GM12878 (cell line): ENCODE measurements at regions of chr3 and their contacts with region 1.

Region 1: DNA sequence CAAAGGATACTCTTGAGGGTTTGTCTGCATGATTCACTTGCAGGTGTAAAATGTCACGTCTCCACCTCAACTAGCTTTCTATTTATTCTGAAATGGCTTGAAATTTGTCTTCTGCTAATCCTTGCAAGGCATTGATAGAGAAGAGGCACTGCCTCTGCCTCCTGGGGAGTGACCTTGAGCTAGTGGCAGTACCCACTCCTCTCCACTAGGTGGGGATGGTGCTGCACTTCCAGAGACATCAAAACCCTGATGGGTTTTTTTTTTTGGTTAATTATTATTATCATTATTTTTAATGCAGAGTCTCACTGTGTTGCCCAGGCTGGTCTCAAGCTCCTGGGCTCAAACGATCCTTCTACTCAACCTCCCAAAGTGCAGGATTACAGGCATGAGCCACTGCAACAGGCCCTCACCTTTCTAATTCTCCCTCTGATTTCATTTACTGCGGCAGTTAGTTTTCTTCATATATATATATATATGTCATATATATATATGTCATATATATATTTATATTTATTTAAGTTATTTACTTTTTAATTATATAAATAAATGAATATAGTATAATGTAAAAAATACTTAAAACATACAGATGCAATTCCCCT is 117.6 kb upstream of the EIF1B start:
- DNase-seq: no peak
- ATAC-seq: peak; percentile 75
- H3K4me3 ChIP-seq: no peak overlapping the region
- H3K27ac ChIP-seq: no peak overlapping the region
- H3K4me1 ChIP-seq: peaks cover 18% of the 10 kb centered on the region
- H3K27me3 ChIP-seq: no peaks in the 10 kb centered on the region
- CTCF ChIP-seq: peak; percentile 86 to 95 (median 89)
- EP300 ChIP-seq: no peak
- POLR2A ChIP-seq: no peak
- RAD21 ChIP-seq: peak; percentile 89

Region 2: GRCh38 chr3:40309418-40309924 is 117.5 kb after region 1 on chr3 and contains the start of gene EIF1B:
- CTCF ChIA-PET with region 1: interaction called, 317 read pairs
- POLR2A ChIA-PET with region 1: interaction called, 5 read pairs
- RAD21 ChIA-PET with region 1: interaction called, 65 read pairs
- SMC1A ChIA-PET with region 1: interaction called, 52 read pairs
- in situ Hi-C with region 1: no loop called
- intact Hi-C with region 1: no loop called
- DNase-seq: peak; percentile 87
- ATAC-seq: peak; percentile 94
- H3K4me3 ChIP-seq: peak within 1 kb of the TSS; percentile 90
- H3K27ac ChIP-seq: peak within 1 kb of the TSS; percentile 90
- H3K4me1 ChIP-seq: no peaks in the 10 kb centered on the region
- H3K27me3 ChIP-seq: no peaks in the 10 kb centered on the region
- CTCF ChIP-seq: peak; percentile 80 to 88 (median 85)
- EP300 ChIP-seq: no peak; a peak in 1 of 4 replicates
- POLR2A ChIP-seq: peak; percentile 84
- RAD21 ChIP-seq: peak; percentile 18; the same call in 1 of the 2 replicates
- polyA plus RNA-seq, gene EIF1B: 69.3 to 75.6 TPM

Region 3: DNA sequence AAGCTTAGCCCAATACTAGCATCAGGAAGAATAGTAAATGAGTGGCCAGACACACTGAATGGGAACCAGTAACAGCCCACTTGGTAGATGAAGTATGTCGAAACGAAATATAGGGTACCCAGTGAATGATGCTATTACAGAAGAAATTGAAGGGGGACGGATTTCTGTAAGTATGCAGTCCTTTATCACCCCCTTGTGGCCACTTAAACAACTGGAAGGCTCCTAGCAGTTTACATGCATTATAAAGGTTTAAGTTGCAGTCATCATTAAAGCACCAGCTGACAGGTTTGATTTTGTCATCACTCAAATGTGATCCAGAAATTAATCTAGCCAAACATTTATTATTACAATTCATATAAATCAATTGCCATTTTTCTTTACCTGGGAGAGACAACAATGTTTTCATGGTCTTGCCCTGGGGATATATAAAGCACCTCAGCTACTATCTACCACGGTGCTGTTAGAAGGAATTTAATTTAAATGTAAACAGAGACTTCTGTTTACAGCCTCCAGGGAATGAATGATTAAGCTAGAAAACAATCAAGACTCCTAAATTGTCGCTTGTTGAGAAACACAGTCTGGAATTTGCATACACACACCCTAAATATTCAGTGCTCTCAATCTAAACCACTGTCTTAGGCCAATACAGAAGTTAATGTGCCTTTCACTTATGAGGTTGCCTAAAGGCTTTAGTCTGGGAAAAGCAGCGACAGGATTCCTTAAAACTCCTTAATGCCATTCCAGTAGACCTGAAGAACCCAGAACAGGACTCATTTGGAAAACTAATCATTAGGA is 125.3 kb after region 1 on chr3:
- CTCF ChIA-PET with region 1: interaction called, 317 read pairs
- POLR2A ChIA-PET with region 1: interaction called, 5 read pairs
- RAD21 ChIA-PET with region 1: interaction called, 65 read pairs
- SMC1A ChIA-PET with region 1: interaction called, 52 read pairs
- in situ Hi-C with region 1: loop called (anchors 5 kb)
- intact Hi-C with region 1: loop called (anchors 1 kb)
- DNase-seq: no peak
- ATAC-seq: peak; percentile 90
- H3K4me3 ChIP-seq: no peak overlapping the region
- H3K27ac ChIP-seq: no peak overlapping the region
- H3K4me1 ChIP-seq: no peaks in the 10 kb centered on the region
- H3K27me3 ChIP-seq: no peaks in the 10 kb centered on the region
- CTCF ChIP-seq: peak; percentile 73 to 79 (median 77)
- EP300 ChIP-seq: no peak
- POLR2A ChIP-seq: no peak
- RAD21 ChIP-seq: peak; percentile 83

Region 4: GRCh38 chr3:40452876-40453730 is 261.2 kb after region 1 on chr3:
- CTCF ChIA-PET with region 1: interaction called, 9 read pairs
- POLR2A ChIA-PET with region 1: no interaction called
- RAD21 ChIA-PET with region 1: no interaction called
- SMC1A ChIA-PET with region 1: interaction called, 3 read pairs
- in situ Hi-C with region 1: no loop called
- intact Hi-C with region 1: loop called (anchors 10 kb)
- DNase-seq: peak; percentile 93
- ATAC-seq: peak; percentile 95
- H3K4me3 ChIP-seq: peak overlapping the region; percentile 82
- H3K27ac ChIP-seq: peak overlapping the region; percentile 81
- H3K4me1 ChIP-seq: no peaks in the 10 kb centered on the region; the same call in 1 of the 2 replicates
- H3K27me3 ChIP-seq: no peaks in the 10 kb centered on the region
- CTCF ChIP-seq: no peak
- EP300 ChIP-seq: no peak
- POLR2A ChIP-seq: peak; percentile 87
- RAD21 ChIP-seq: no peak